ENCODE measurements at regions of chr2 and their contacts with region 1.

Region 1: GRCh38 chr2:190880378-190881073 is at the start of gene GLS:
- DNase-seq: peak; percentile 96
- ATAC-seq: peak; percentile 97
- total RNA-seq, gene GLS: 44.8 TPM

Region 2: DNA sequence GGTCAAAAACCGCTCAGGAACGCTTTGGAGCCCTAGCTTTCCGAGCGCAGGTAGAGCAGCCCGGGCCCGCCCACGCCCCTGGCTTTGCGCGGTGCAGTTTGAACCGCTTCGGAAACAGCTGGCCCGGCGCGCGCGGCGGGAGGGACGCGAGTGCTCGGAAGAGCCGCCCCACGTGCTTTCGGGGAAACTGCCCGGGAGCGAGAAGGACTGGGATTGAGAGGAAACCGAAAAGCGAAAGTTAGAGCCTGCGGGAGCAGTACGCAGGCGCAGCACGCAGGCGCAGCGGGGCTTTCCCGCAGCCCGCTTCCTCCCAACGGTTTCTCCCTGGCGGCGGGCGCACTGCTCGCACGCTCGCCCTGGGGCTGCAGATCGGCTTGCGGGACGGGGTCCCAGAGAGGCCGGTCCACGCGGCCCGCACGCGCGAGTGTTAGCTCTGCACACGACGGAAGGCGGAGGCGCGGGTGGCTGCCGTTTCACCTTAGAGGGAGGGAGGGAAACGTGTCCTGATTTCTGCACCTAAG is 139.8 kb after region 1 on chr2:
- intact Hi-C with region 1: loop called (anchors 2 kb)
- DNase-seq: peak; percentile 96
- ATAC-seq: peak; percentile 99